Activated CD4-positive, alpha-beta memory T cell treated with anti-CD3 and anti-CD28 coated beads, Interleukin-2, amount 10 ng/mL, durations not matched to agents 7 days and 5 days (primary cell): ENCODE measurements at regions of chr3 and their contacts with region 1.

Region 1: GRCh38 chr3:46078712-46079400 is 51.6 kb upstream of the XCR1 start:
- DNase-seq: peak; percentile 91
- H3K4me3 Mint-ChIP-seq: no peak overlapping the region
- H3K27ac Mint-ChIP-seq: no peak overlapping the region
- H3K4me1 Mint-ChIP-seq: peaks cover 33% of the 10 kb centered on the region
- H3K27me3 Mint-ChIP-seq: peaks cover 27% of the 10 kb centered on the region

Region 2: GRCh38 chr3:45224824-45225464 is 853.9 kb before region 1 on chr3:
- CTCF ChIA-PET with region 1: no interaction called
- POLR2A ChIA-PET with region 1: no interaction called
- DNase-seq: peak; percentile 36
- H3K4me3 Mint-ChIP-seq: peak overlapping the region; percentile 61
- H3K27ac Mint-ChIP-seq: peak overlapping the region; percentile 11
- H3K4me1 Mint-ChIP-seq: peaks cover 10% of the 10 kb centered on the region
- H3K27me3 Mint-ChIP-seq: peaks cover 77% of the 10 kb centered on the region

Region 3: GRCh38 chr3:45716790-45717336 is 362.0 kb before region 1 on chr3:
- CTCF ChIA-PET with region 1: no interaction called
- POLR2A ChIA-PET with region 1: no interaction called
- DNase-seq: no peak
- H3K4me3 Mint-ChIP-seq: no peak overlapping the region
- H3K27ac Mint-ChIP-seq: no peak overlapping the region
- H3K4me1 Mint-ChIP-seq: peaks cover 8% of the 10 kb centered on the region
- H3K27me3 Mint-ChIP-seq: no peaks in the 10 kb centered on the region

Region 4: DNA sequence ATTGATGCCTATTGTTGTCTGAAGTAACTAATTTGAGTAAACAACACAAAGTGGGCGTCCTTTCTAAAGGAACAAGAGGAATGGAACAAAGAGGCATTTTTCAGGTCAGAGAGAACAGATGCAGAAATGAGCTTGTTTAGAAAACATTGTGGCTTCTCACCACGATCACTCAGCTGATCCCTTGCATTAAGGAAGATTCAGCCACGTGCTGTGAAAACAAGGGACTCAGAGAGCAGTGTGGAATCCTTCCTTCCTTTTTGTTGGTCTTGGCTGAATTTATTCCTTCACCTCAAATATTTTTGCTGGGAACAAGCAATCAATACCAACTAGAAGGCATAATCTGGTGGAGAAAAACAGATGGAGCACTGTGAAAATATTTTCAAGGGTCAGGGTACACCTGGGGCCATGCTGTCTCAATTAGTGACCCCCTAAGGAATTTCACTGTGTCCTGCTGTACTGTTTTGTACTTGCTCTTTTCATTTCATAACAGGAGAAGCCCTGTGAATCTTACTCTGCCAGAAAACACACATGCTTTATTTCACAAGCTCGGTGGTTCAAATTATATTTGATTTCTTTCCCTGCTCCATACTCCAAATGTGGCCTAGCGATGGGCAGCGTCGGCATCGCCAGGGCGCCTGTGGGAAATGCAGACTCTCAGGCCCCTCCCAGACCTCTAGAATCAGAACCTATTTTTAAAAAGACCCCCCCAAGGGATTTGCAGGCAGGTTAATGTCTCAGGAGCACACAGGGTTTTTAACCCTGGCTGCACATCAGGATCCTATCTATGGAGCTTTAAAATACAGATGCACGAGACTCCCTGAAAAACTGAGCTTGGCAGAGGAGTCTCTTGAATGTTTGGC is 270.9 kb before region 1 on chr3:
- CTCF ChIA-PET with region 1: no interaction called
- POLR2A ChIA-PET with region 1: no interaction called
- DNase-seq: no peak
- H3K4me3 Mint-ChIP-seq: no peak overlapping the region
- H3K27ac Mint-ChIP-seq: no peak overlapping the region
- H3K4me1 Mint-ChIP-seq: no peaks in the 10 kb centered on the region
- H3K27me3 Mint-ChIP-seq: peaks cover 34% of the 10 kb centered on the region

Region 5: GRCh38 chr3:45938864-45939263 is 140.0 kb before region 1 on chr3:
- CTCF ChIA-PET with region 1: interaction called, 232 read pairs
- POLR2A ChIA-PET with region 1: interaction called, 24 read pairs
- DNase-seq: peak; percentile 89
- H3K4me3 Mint-ChIP-seq: no peak overlapping the region
- H3K27ac Mint-ChIP-seq: peak overlapping the region; percentile 2
- H3K4me1 Mint-ChIP-seq: peaks cover 52% of the 10 kb centered on the region
- H3K27me3 Mint-ChIP-seq: no peaks in the 10 kb centered on the region

Region 6: DNA sequence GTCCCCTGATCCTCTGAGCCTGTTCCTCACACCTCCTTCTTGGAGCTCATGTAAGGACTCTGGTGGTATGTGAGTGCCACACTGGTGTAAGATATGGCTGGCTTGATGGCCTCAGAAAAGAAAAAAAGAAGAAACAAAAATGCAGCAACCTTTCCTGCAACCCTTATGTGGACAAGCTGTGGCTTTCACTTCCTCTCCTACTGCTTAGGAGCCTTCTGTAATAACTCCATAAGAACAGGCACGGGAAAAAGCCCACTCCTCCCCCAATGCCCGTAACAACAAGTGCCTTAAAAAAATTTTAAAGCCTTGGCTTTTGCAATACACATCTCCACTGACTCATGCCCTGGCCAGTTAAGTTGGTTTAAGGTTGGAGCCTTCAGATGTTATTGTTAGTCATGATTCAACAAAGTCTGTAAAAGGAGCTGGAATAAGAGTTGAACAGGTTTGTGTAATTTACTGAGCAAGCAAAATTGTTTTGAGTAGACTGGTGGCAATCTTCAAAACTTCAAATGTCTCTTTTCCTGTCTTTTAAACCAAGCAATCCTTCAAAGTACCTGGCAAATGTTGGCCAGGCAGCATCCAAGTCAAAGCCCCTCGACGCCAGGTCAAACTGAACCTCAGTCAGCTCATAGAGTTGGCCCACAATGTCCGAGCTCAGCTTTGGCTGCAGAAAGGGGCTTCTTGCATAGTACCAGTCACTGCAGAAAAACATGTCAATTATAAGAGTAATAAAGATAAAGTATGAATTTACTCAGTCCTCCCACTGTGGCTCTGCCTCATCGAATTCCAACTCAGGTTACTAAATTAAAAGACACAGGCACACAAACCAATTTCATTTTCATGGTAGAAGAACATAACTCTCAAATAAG is 106.1 kb before region 1 on chr3:
- CTCF ChIA-PET with region 1: interaction called, 52 read pairs
- POLR2A ChIA-PET with region 1: no interaction called
- DNase-seq: no peak
- H3K4me3 Mint-ChIP-seq: no peak overlapping the region
- H3K27ac Mint-ChIP-seq: peak overlapping the region; percentile 72
- H3K4me1 Mint-ChIP-seq: peaks cover 83% of the 10 kb centered on the region
- H3K27me3 Mint-ChIP-seq: no peaks in the 10 kb centered on the region

Region 7: GRCh38 chr3:46049116-46049515 is 29.7 kb before region 1 on chr3:
- CTCF ChIA-PET with region 1: interaction called, 12 read pairs
- POLR2A ChIA-PET with region 1: no interaction called
- DNase-seq: no peak
- H3K4me3 Mint-ChIP-seq: no peak overlapping the region
- H3K27ac Mint-ChIP-seq: no peak overlapping the region
- H3K4me1 Mint-ChIP-seq: peaks cover 30% of the 10 kb centered on the region
- H3K27me3 Mint-ChIP-seq: peaks cover 16% of the 10 kb centered on the region

Region 8: DNA sequence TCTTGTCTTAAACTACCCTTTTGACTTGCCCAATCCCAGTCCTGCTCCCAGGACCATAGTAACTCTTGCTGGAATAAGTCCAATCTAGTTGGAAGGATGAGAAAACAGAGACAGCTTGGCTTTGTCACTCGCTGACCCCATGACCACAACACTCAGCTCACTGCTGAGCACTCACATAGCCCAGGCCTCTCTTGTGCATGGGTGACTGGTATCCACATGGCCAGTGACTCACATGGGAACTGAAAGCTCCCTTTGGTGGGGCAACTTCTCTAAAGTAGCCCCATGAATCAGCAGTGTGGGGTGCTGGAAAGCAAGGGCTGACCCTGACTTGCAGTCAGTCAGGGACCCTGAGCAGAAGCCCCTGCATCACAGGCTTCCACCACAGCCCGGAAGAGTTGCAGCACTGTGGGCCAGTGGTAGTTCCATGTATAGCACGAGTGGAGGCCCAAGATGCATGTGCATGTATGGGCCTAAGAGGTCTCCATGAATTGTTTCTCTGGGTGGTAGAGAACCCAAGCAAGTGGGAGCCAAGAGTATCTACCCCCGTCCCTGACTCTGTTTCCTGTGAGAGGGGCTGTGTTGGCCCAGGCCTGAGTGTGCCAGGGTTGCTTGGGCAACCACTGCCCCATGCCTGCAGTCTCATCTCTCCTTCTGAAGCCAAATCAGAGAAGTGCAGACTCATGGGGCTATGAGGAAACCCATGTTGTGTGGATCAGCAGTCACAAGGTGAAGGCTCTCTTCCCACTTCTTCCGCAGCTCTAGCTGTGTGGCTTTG is 10.6 kb after region 1 on chr3:
- CTCF ChIA-PET with region 1: interaction called, 19 read pairs
- POLR2A ChIA-PET with region 1: interaction called, 4 read pairs
- DNase-seq: peak; percentile 29
- H3K4me3 Mint-ChIP-seq: no peak overlapping the region
- H3K27ac Mint-ChIP-seq: no peak overlapping the region
- H3K4me1 Mint-ChIP-seq: peaks cover 59% of the 10 kb centered on the region
- H3K27me3 Mint-ChIP-seq: peaks cover 27% of the 10 kb centered on the region

Region 9: GRCh38 chr3:46312991-46313390 is 234.1 kb after region 1 on chr3:
- CTCF ChIA-PET with region 1: no interaction called
- POLR2A ChIA-PET with region 1: no interaction called
- DNase-seq: no peak
- H3K4me3 Mint-ChIP-seq: no peak overlapping the region
- H3K27ac Mint-ChIP-seq: no peak overlapping the region
- H3K4me1 Mint-ChIP-seq: peaks cover 20% of the 10 kb centered on the region
- H3K27me3 Mint-ChIP-seq: peaks cover 53% of the 10 kb centered on the region

Region 10: GRCh38 chr3:46378426-46378942 is 299.6 kb after region 1 on chr3:
- CTCF ChIA-PET with region 1: interaction called, 20 read pairs
- POLR2A ChIA-PET with region 1: no interaction called
- DNase-seq: peak; percentile 74
- H3K4me3 Mint-ChIP-seq: no peak overlapping the region
- H3K27ac Mint-ChIP-seq: no peak overlapping the region
- H3K4me1 Mint-ChIP-seq: peaks cover 59% of the 10 kb centered on the region
- H3K27me3 Mint-ChIP-seq: peaks cover 6% of the 10 kb centered on the region